RWPE1 (cell line): ENCODE measurements at regions of chr1 and their contacts with region 1.

Region 1: GRCh38 chr1:200669314-200670241 is at the start of gene DDX59:
- DNase-seq: peak; percentile 98
- H3K27ac ChIP-seq: peak within 1 kb of the TSS; percentile 99
- CTCF ChIP-seq: no peak

Region 2: GRCh38 chr1:200602632-200603031 is 66.9 kb before region 1 on chr1:
- CTCF ChIA-PET with region 1: no interaction called
- POLR2A ChIA-PET with region 1: no interaction called
- DNase-seq: no peak
- H3K27ac ChIP-seq: no peak overlapping the region
- CTCF ChIP-seq: no peak

Region 3: DNA sequence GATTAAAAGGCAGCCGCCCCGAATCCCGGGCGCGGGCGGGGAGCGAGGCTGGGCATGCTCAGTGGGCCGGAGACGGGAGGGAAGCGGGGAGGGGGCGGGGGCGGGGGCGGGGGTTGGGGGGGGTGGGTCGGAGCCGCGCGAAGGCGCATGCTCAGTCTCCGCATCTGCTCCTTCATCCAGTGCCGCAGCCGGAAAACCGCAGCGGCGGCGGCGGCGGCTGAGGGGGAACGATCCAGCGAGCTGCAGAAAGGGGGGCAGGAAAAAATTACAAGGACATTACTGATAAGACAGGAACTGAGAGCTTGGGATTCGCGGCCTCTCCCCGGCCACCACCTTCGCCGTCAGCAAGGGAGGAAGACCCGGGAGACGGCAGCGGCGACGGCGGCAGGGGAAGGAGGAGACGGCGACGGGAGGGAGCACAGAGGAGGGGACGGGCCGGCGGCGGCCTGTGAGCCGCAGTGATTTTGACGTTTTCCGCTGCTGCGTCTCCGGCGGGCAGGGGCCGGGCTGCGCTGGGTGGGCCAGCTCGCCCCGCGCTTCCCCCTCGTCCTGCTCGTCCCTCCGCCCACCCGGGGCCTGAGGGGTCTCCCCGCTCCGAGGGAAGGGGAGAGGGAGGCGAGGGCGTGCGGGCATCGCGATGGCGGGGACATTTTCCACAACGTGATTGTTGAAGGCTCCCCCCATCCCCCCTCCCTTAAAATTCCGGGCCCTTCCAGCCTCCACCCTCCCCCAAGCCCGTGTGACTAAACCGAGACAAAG is 69.3 kb after region 1 on chr1 and contains the start of gene CAMSAP2:
- CTCF ChIA-PET with region 1: interaction called, 4 read pairs
- POLR2A ChIA-PET with region 1: interaction called, 19 read pairs
- DNase-seq: peak; percentile 97
- H3K27ac ChIP-seq: peak within 1 kb of the TSS; percentile 100
- CTCF ChIP-seq: no peak

Region 4: GRCh38 chr1:200784576-200784975 is 115.0 kb after region 1 on chr1:
- CTCF ChIA-PET with region 1: no interaction called
- POLR2A ChIA-PET with region 1: interaction called, 10 read pairs
- DNase-seq: no peak
- H3K27ac ChIP-seq: no peak overlapping the region
- CTCF ChIP-seq: no peak